Naive thymus-derived CD8-positive, alpha-beta T cell (primary cell): ENCODE measurements at regions of chr11 and their contacts with region 1.

Region 1: GRCh38 chr11:118705111-118705741 is 25.8 kb upstream of the TREH start:
- DNase-seq: peak in 9 of 10 donors; percentile 31 to 80 (median 59)
- ATAC-seq: peak; percentile 78 to 87
- H3K4me3 Mint-ChIP-seq: peak overlapping the region; percentile 60 to 89 (median 78)
- H3K27ac Mint-ChIP-seq: peak overlapping the region; percentile 90 to 99 (median 96)
- H3K4me1 Mint-ChIP-seq: peaks cover 22 to 55% (median 46%) of the 10 kb centered on the region in 4 donors
- H3K27me3 Mint-ChIP-seq: no peaks in the 10 kb centered on the region

Region 2: GRCh38 chr11:118689851-118690552 is 15.2 kb before region 1 on chr11:
- POLR2A ChIA-PET with region 1: interaction called, 73 read pairs
- DNase-seq: peak; percentile 71 to 91 (median 81)
- ATAC-seq: peak; percentile 87 to 94
- H3K4me3 Mint-ChIP-seq: peak overlapping the region; percentile 50 to 82 (median 76)
- H3K27ac Mint-ChIP-seq: peak overlapping the region; percentile 22 to 97 (median 77)
- H3K4me1 Mint-ChIP-seq: peaks cover 29 to 70% (median 51%) of the 10 kb centered on the region in 4 donors
- H3K27me3 Mint-ChIP-seq: no peaks in the 10 kb centered on the region

Region 3: GRCh38 chr11:118715245-118715831 is 10.1 kb after region 1 on chr11:
- POLR2A ChIA-PET with region 1: interaction called, 15 read pairs
- DNase-seq: no peak
- ATAC-seq: no peak
- H3K4me3 Mint-ChIP-seq: no peak overlapping the region
- H3K27ac Mint-ChIP-seq: peak overlapping the region in 2 of 10 donors; percentile 2 to 53
- H3K4me1 Mint-ChIP-seq: peaks cover 4 to 13% (median 5%) of the 10 kb centered on the region in 4 donors
- H3K27me3 Mint-ChIP-seq: no peaks in the 10 kb centered on the region

Region 4: DNA sequence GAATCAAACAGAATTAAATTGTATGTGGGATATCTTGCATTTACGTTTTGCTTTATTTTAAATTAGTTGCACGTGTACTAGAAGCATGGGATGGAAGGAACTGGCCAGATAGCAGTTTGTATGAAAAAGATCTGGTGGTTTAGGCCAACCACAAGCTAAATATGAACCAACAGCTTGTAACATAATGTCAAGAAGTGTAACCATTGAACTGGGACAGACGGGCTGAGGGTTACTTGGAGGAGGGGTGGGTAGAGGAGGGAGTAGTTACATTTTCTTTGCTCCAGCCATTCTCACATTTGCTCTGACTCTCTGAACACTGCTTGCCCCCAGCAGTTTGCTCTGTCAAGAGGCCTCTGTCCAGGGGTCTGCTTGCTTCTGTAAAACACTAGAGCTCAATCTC is 146.7 kb after region 1 on chr11:
- POLR2A ChIA-PET with region 1: no interaction called
- DNase-seq: no peak
- ATAC-seq: no peak
- H3K4me3 Mint-ChIP-seq: peak overlapping the region in 1 of 10 donors; percentile 6
- H3K27ac Mint-ChIP-seq: peak overlapping the region in 5 of 10 donors; percentile 23 to 53 (median 41)
- H3K4me1 Mint-ChIP-seq: peaks cover 10 to 20% (median 13%) of the 10 kb centered on the region in 4 donors
- H3K27me3 Mint-ChIP-seq: no peaks in the 10 kb centered on the region